CD8-positive, alpha-beta memory T cell (primary cell): ENCODE measurements at regions of chr11 and their contacts with region 1.

Region 1: DNA sequence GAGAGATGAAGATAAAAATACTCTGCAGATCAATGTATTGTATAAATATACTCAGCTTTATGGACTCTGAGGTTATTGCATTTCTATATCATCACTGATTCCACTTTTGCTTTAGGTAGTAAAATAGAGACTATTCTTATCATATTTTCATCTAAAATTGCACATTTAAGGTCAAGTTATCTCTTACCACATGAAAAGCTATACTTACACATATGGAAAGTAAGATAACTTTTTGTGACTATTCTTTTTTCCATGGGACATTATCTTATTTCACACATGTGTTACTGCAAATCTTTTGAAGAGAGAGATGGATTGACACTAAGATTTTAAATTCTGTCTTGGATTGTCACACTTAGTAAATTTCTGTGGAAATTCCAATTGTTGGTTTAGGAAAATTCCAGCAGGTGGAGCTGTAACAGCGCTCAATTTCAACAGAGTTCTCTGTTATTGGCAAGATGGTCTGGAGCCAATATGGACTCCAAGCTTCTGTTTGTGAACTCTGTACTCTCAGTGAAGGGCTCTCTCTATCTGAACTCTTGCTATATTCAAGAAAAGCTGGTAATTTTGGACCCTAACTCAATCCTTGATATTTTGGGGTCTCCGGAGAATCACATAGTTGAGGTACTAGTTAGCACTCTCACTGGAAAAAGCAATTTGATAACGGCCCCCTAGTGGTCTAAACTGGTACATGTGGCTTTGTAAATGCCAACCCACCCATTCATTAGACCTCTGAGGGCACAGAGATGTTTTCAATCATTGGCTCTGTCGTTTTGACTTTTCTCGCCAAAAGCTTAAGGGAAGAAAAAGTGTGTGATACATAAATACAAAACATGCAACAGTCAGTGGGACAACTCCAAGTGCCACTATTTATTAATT is 429.7 kb downstream of the ETS1 start:
- DNase-seq: peak; percentile 25 to 73 (median 64)
- H3K4me3 ChIP-seq: peak overlapping the region; percentile 54
- H3K4me3 Mint-ChIP-seq: peak overlapping the region; percentile 44 to 92 (median 86)
- H3K27ac ChIP-seq: no peak overlapping the region
- H3K27ac Mint-ChIP-seq: peak overlapping the region in 6 of 8 donors; percentile 47 to 86 (median 74)
- H3K4me1 ChIP-seq: no peaks in the 10 kb centered on the region
- H3K4me1 Mint-ChIP-seq: peaks cover 6 to 10% (median 8%) of the 10 kb centered on the region in 3 donors
- H3K27me3 ChIP-seq: no peaks in the 10 kb centered on the region
- H3K27me3 Mint-ChIP-seq: peaks cover 0 to 1% of the 10 kb centered on the region in 2 donors

Region 2: GRCh38 chr11:127843483-127844396 is 313.9 kb before region 1 on chr11:
- CTCF ChIA-PET with region 1: no interaction called
- POLR2A ChIA-PET with region 1: no interaction called
- DNase-seq: peak; percentile 4 to 57 (median 17)
- H3K4me3 ChIP-seq: no peak overlapping the region
- H3K4me3 Mint-ChIP-seq: no peak overlapping the region
- H3K27ac ChIP-seq: no peak overlapping the region
- H3K27ac Mint-ChIP-seq: no peak overlapping the region
- H3K4me1 ChIP-seq: no peaks in the 10 kb centered on the region
- H3K4me1 Mint-ChIP-seq: no peaks in the 10 kb centered on the region
- H3K27me3 ChIP-seq: no peaks in the 10 kb centered on the region
- H3K27me3 Mint-ChIP-seq: peaks cover 3 to 11% of the 10 kb centered on the region in 2 donors

Region 3: DNA sequence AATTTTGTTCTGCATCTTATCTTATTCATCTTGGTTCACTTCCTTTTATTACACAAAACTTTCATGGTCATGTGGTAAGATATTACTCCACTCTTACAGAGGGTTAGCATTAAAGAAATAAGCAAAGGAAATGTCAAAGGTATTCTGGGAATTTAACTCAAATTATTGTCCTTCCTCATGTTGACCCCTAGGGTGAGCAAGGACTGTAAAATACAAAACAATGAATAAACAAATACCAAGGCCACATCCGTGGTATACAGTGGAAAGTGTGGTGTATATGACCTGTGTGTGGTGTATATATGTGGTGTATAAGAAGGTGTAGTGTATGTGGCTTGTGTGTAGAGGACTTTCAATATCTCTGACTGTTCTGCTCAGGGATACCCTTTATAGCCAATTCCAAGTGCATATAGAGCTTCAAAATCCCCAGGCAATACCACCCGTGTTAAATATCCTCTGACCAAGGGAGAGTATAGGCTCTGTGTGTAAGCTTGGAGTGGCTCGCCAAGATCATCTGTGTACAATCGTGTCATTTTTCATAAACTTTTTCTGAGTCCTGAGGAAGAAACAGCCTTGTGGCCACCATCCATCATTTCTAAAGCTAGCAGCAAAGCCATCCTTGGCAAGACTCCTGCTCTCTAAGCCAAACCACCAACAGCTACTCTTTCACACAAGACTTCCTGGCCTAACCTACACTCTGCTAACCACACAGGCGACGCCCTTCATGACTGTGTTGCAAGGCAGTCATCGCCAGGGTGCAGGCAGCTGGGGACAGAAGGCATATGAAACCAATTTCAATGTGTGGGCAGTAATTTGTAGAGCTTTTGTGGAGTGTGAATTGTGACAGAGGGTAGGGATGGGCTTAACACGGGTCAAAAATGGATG is 118.3 kb before region 1 on chr11:
- CTCF ChIA-PET with region 1: interaction called, 69 read pairs
- POLR2A ChIA-PET with region 1: interaction called, 10 read pairs
- DNase-seq: peak; percentile 55 to 90 (median 76)
- H3K4me3 ChIP-seq: peak overlapping the region; percentile 41
- H3K4me3 Mint-ChIP-seq: no peak overlapping the region
- H3K27ac ChIP-seq: peak overlapping the region; percentile 60
- H3K27ac Mint-ChIP-seq: peak overlapping the region in 3 of 8 donors; percentile 44 to 92 (median 91)
- H3K4me1 ChIP-seq: peaks cover 84% of the 10 kb centered on the region
- H3K4me1 Mint-ChIP-seq: peaks cover 26 to 55% (median 28%) of the 10 kb centered on the region in 3 donors
- H3K27me3 ChIP-seq: no peaks in the 10 kb centered on the region
- H3K27me3 Mint-ChIP-seq: no peaks in the 10 kb centered on the region

Region 4: GRCh38 chr11:128052912-128053641 is 104.6 kb before region 1 on chr11:
- CTCF ChIA-PET with region 1: interaction called, 11 read pairs
- POLR2A ChIA-PET with region 1: no interaction called
- DNase-seq: peak in 2 of 5 donors; percentile 49 to 57
- H3K4me3 ChIP-seq: peak overlapping the region; percentile 17
- H3K4me3 Mint-ChIP-seq: peak overlapping the region; percentile 57 to 84 (median 81)
- H3K27ac ChIP-seq: peak overlapping the region; percentile 10
- H3K27ac Mint-ChIP-seq: peak overlapping the region; percentile 84 to 99 (median 87)
- H3K4me1 ChIP-seq: peaks cover 69% of the 10 kb centered on the region
- H3K4me1 Mint-ChIP-seq: peaks cover 62 to 84% (median 81%) of the 10 kb centered on the region in 3 donors
- H3K27me3 ChIP-seq: no peaks in the 10 kb centered on the region
- H3K27me3 Mint-ChIP-seq: no peaks in the 10 kb centered on the region

Region 5: DNA sequence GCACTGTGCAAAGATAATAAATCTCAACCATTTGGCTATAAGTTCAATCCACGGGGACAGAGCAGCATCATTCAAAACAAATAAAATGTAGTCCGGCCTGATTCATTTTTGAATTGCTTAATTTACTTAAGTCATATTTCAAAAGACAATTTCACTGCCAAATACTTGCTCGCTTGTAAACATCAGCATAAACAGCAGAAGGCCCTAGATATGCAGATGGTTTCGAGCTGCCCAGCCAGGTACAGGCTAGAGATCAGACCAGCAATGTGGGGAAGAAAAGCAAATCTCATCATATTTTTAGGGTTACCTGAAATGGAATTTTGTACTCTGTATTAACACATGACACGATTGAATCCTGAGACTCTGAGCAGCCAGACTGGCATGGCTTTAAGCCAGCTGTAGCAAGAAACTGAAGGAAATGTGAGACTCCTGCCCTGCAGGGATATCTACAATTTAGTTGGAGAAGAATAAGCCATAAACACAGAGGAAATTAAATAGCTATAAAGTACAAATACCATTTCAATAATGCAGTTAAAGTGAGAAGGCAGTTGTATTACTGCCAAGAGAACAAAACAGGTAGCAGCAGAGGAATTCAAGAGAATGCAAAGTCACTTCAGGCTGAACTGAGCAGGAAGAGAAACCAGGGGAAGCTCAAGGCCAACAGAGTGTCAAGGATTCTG is 10.6 kb before region 1 on chr11:
- CTCF ChIA-PET with region 1: interaction called, 15 read pairs
- POLR2A ChIA-PET with region 1: interaction called, 4 read pairs
- DNase-seq: no peak
- H3K4me3 ChIP-seq: no peak overlapping the region
- H3K4me3 Mint-ChIP-seq: no peak overlapping the region
- H3K27ac ChIP-seq: no peak overlapping the region
- H3K27ac Mint-ChIP-seq: peak overlapping the region in 3 of 8 donors; percentile 20 to 62 (median 47)
- H3K4me1 ChIP-seq: no peaks in the 10 kb centered on the region
- H3K4me1 Mint-ChIP-seq: peaks cover 0 to 9% (median 2%) of the 10 kb centered on the region in 3 donors
- H3K27me3 ChIP-seq: no peaks in the 10 kb centered on the region
- H3K27me3 Mint-ChIP-seq: no peaks in the 10 kb centered on the region

Region 6: DNA sequence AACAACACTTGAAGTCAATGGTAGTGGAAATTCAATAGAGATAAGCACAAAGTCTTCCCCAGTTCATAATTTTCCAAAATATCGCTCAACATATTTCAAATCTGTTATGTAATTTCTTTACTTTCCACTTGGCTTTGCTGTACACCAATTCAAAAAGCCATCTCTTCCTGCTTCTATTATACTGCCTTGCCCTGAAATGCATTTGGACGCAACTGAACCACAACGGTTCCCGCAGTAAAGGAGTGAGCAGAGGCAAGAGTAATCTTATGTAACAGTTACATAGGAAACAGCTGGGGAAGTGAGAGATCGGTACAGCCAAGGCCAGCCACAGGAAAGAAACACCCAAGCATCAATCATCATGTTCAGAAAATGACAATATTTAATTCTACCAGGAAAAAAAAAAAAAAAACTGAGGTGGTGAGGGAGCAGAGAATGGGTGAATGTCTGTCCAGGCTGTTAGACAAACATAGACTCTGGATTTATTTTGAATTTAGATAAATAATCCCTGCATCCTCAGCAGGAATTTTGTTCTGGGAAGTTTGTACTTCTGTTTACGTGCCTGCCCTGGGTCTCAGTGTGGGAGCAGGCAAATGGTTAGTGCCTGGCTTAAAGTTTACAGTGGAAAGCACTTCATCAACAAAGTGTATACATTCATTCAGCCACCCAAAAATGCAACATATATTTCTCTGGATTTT is 37.5 kb after region 1 on chr11:
- CTCF ChIA-PET with region 1: no interaction called
- POLR2A ChIA-PET with region 1: no interaction called
- DNase-seq: peak; percentile 4 to 73 (median 54)
- H3K4me3 ChIP-seq: no peak overlapping the region
- H3K4me3 Mint-ChIP-seq: peak overlapping the region in 6 of 7 donors; percentile 27 to 58 (median 32)
- H3K27ac ChIP-seq: no peak overlapping the region
- H3K27ac Mint-ChIP-seq: peak overlapping the region; percentile 3 to 89 (median 64)
- H3K4me1 ChIP-seq: peaks cover 41% of the 10 kb centered on the region
- H3K4me1 Mint-ChIP-seq: peaks cover 41 to 66% (median 48%) of the 10 kb centered on the region in 3 donors
- H3K27me3 ChIP-seq: no peaks in the 10 kb centered on the region
- H3K27me3 Mint-ChIP-seq: no peaks in the 10 kb centered on the region

Region 7: DNA sequence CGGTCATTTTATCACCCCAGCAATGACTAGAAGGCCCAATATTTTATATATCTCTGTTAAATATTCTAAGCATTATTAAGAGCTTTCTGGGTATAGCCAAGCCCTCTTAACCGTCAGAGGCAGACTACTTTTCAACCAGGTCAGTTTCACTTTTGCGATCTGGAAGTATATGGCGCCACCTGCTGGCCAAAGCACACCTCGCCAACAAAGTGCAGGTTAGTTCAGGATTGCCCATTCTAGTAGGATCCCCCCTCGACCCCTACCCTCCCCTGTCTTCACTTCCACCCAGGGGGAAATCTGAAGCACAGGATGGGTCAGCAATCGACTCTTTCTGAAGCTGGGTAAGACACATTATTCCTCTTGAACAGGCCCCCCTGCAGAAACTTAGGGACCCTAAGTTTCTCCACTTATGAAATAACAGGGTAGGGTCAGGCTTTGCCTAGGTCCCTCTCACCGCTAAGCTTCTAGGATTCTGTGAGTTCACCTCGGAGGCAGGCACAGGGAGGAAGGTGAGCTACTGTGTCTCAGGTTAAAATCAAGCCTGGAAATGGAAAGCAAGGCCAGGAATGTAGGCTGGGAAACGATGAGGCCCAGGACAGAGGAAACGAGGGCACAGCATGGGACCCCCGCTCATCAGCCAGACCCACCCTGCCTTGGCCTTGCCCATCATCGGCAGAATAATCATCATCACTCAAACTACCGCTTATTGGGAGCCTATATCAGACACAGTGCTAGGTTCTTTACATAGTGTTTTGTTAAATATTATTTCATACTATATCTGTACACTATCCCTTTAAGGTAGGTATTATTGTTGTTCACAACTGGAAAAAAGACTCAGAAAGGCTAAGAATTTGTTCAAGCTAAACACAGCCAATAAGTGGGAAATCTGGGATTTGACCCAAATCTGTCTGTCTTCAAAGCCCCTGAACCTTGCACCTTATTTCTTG is 673.8 kb after region 1 on chr11:
- CTCF ChIA-PET with region 1: interaction called, 51 read pairs
- POLR2A ChIA-PET with region 1: no interaction called
- DNase-seq: peak; percentile 75 to 89 (median 80)
- H3K4me3 ChIP-seq: peak overlapping the region; percentile 4
- H3K4me3 Mint-ChIP-seq: peak overlapping the region; percentile 69 to 89 (median 72)
- H3K27ac ChIP-seq: peak overlapping the region; percentile 57
- H3K27ac Mint-ChIP-seq: peak overlapping the region; percentile 74 to 98 (median 92)
- H3K4me1 ChIP-seq: peaks cover 13% of the 10 kb centered on the region
- H3K4me1 Mint-ChIP-seq: peaks cover 21 to 39% (median 36%) of the 10 kb centered on the region in 3 donors
- H3K27me3 ChIP-seq: no peaks in the 10 kb centered on the region
- H3K27me3 Mint-ChIP-seq: no peaks in the 10 kb centered on the region